BJ (cell line): ENCODE measurements at regions of chr1 and their contacts with region 1.

Region 1: DNA sequence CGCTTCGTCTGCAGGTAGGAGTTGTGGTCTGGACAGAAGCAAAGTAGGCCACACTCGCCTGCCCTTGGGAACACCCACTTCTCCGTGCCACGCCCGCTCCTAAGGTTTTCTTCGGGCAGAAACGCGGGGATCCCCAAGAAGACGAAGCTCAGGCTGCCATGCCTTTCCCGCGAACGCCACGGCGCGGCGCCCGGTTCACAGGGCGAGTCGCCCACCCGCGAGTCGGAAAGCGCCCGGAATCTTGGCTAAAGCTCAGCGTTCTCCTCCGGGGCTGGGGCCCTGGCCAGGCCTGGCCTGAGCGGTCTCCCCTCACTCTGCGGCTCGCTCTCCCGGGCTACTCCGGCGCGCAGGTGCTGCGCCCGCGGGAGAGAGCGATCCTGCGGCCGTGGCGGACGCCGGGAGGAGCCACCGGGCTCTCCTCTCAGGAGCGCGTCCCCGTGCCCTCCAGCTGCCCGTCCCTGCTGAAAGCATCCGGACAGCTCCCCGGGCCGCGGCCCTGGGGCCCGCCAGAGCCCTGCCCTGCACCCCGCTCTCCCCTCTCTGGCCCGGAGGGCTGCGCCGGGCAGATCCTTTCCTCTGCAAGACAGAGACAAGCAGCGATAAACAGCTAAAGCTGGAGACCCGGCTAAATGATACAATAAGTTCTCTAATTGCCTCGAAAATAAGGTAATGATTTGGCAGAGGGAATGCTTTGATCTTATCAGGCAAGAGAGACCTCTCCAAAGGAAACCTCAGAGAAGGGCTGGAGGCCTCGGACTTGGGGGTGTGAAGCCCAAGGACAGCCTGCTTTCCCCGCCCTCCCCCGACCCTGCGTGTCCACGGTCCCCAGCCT is 6.7 kb upstream of the WNT2B start:
- DNase-seq: no peak
- H3K4me3 ChIP-seq: peak overlapping the region; percentile 49
- H3K27me3 ChIP-seq: no peaks in the 10 kb centered on the region
- CTCF ChIP-seq: peak; percentile 93

Region 2: GRCh38 chr1:112522621-112523020 is 20.6 kb after region 1 on chr1:
- CTCF ChIA-PET with region 1: interaction called, 24 read pairs
- POLR2A ChIA-PET with region 1: interaction called, 3 read pairs
- DNase-seq: peak; percentile 66
- H3K4me3 ChIP-seq: no peak overlapping the region
- H3K27me3 ChIP-seq: no peaks in the 10 kb centered on the region
- CTCF ChIP-seq: no peak

Region 3: DNA sequence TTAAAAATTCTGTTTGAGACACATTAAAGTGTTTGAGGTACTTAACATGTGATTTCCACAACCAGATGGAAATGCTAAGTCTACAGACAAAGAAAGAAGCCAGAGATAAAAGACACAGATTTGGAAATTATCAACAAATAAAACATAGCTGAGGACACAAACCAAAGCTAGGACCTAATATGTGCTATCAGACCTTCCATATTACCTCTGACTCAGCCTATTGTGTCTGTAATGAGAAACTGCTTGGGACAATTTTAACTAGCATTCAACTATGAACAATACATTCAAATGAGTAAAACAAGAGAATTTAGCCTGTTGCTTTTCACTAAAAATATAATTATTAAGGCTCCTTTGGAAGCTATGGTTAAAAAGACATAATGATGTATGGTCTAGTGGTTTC is 61.3 kb after region 1 on chr1:
- CTCF ChIA-PET with region 1: no interaction called
- POLR2A ChIA-PET with region 1: no interaction called
- DNase-seq: no peak
- H3K4me3 ChIP-seq: no peak overlapping the region
- H3K27me3 ChIP-seq: no peaks in the 10 kb centered on the region
- CTCF ChIP-seq: no peak

Region 4: DNA sequence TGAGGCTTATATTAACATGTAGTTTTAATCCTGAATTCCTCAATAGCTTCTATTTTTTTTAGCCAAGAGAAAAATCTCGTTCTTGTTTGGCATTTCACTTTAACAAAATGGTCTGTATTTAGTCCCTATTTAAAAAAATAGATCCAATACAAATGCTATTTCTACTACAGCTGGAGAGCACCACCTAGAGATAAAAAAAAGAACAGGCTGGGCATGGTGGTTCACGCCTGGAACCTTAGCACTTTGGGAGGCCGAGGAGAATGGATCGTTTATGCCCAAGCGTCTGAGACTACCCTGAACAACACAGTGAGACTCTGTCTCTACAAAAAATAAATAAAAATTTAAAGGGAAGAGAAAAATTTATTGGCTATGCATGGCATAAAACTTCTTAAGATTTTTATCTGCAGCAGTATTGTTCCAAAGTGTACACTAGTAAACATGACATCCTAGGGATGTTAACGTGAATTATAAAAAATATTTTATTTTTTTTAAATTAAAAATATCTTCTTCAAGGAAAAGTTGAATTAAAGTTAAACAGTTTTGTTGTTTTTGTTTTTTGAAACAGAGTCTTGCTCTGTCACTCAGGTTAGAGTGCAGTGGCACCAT is 112.5 kb after region 1 on chr1:
- CTCF ChIA-PET with region 1: interaction called, 56 read pairs
- POLR2A ChIA-PET with region 1: interaction called, 4 read pairs
- DNase-seq: no peak
- H3K4me3 ChIP-seq: no peak overlapping the region
- H3K27me3 ChIP-seq: no peaks in the 10 kb centered on the region
- CTCF ChIP-seq: peak; percentile 73

Region 5: DNA sequence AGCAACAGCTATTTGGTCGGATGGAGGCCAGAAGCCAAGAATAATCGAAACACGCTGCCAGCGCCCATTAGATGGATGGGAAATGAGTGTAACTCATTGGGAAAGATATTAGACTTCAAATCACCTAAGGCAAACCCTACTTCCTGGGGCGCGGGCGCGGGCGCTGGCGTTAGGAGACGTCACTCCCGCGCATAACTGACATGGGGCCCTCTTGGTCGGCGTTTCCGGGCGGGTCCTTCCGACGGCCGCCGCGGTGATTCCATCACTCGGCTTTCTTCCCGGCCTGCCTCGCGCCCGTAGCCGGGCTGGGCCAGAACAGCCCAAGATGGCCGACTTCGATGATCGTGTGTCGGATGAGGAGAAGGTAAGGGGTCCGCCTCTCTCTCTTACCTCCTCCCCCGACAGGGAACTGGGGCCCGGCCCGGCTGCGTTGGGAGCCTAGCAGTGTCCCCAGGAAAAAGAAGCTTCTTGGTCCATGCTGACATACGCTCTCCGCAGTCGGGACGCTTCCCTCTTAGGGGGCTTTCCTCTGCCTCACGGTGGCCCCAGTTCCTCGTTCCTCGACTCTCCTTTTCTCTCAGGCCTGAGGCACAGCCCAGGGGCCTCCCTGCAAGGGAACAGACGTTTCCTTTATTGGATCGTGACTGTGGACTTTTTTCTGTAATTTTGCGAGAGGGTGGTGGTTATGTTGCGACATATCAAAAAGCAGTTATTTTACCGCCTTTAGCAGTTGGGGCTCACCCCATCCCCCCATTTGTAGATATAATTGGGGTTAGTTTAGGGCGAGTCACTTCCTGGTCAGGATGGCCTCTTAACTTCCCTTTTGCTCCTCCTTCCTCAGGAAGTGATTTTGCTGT is 117.7 kb after region 1 on chr1 and contains the start of gene CAPZA1:
- CTCF ChIA-PET with region 1: interaction called, 56 read pairs
- POLR2A ChIA-PET with region 1: interaction called, 4 read pairs
- DNase-seq: peak; percentile 58
- H3K4me3 ChIP-seq: peak within 1 kb of the TSS; percentile 89
- H3K27me3 ChIP-seq: no peaks in the 10 kb centered on the region
- CTCF ChIP-seq: no peak
- polyA plus RNA-seq, gene CAPZA1: 65.1 and 165 TPM in 2 replicates

Region 6: GRCh38 chr1:112651205-112651604 is 149.2 kb after region 1 on chr1:
- CTCF ChIA-PET with region 1: no interaction called
- POLR2A ChIA-PET with region 1: interaction called, 11 read pairs
- DNase-seq: no peak
- H3K4me3 ChIP-seq: no peak overlapping the region
- H3K27me3 ChIP-seq: no peaks in the 10 kb centered on the region
- CTCF ChIP-seq: no peak

Region 7: DNA sequence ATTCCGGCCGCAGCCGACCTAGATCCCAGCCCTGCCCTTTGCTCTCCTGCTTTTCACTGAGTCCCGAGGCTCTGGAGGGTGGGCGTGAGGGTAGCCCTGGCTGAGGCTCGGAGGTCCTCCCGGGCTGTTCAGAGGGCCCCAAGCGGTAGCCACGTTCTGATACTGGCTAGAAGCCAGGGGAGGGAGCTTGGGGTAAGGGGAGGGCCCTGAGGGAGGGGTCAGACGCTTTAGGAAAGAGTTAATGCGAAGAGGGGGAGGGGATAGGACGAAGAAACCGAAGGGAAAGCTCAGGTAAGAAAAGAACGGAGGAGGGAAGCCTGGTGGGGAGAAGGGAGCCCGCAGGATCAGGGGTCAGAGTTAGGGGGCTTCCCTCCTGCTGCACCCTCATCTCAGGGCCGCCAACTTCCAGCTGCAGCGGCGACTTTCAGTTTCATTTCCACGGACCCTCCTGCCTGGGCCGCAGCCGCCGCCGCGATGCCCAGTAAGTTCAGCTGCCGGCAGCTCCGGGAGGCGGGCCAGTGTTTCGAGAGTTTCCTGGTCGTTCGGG is 172.5 kb after region 1 on chr1 and contains the start of gene MOV10:
- CTCF ChIA-PET with region 1: interaction called, 21 read pairs
- POLR2A ChIA-PET with region 1: no interaction called
- DNase-seq: no peak
- H3K4me3 ChIP-seq: peak within 1 kb of the TSS; percentile 54
- H3K27me3 ChIP-seq: no peaks in the 10 kb centered on the region
- CTCF ChIP-seq: no peak
- polyA plus RNA-seq, gene MOV10: 48.9 and 93.7 TPM in 2 replicates

Region 8: DNA sequence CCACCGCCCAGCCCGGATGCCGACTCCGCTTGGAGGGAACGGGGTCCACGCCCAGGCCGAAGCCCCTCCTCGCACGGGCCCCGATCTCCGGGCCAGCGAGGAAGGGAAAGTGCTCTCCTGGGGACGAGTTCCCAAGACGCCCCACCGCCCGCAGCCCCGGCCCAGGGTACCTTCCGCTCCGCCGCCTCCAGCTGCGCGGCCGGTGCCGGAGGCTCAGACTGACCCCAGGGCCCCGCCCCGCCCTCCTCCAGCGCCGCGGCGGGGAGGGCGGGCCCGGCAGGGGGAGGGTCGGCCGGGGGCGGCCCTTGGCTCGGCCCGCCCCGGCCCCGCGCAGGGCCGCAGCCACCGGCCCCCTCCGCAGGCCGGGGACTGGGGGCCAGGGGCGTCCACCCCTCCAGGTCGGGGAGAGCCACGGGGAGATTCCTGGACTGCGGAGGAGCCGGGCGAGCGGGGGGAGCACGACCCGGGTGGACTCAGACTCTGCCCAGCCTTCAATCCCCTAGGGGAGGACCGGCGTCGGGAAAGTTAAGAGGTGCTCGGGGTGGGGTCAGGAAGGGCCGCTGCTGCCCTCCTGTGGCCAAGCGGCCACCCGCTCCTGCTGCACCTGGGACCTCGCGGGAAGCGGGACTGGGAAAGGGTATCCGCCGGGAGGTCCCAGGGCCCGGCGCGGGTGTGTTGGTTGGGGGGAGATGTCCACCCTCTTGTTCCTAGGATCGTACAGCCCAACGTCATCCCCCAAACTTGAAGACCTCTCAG is 205.1 kb after region 1 on chr1 and contains the start of gene RHOC:
- CTCF ChIA-PET with region 1: interaction called, 15 read pairs
- POLR2A ChIA-PET with region 1: no interaction called
- DNase-seq: no peak
- H3K4me3 ChIP-seq: peak within 1 kb of the TSS; percentile 70
- H3K27me3 ChIP-seq: no peaks in the 10 kb centered on the region
- CTCF ChIP-seq: peak; percentile 98
- polyA plus RNA-seq, gene RHOC: 1,093 and 1,537 TPM in 2 replicates